HEK293 (cell line): ENCODE measurements at regions of chr5 and their contacts with region 1.

Region 1: GRCh38 chr5:151164686-151165392 is 7.3 kb upstream of the ANXA6 start:
- H3K4me3 ChIP-seq: no peak overlapping the region
- H3K27ac ChIP-seq: no peak overlapping the region
- H3K4me1 ChIP-seq: no peaks in the 10 kb centered on the region
- CTCF ChIP-seq: peak; percentile 74

Region 2: DNA sequence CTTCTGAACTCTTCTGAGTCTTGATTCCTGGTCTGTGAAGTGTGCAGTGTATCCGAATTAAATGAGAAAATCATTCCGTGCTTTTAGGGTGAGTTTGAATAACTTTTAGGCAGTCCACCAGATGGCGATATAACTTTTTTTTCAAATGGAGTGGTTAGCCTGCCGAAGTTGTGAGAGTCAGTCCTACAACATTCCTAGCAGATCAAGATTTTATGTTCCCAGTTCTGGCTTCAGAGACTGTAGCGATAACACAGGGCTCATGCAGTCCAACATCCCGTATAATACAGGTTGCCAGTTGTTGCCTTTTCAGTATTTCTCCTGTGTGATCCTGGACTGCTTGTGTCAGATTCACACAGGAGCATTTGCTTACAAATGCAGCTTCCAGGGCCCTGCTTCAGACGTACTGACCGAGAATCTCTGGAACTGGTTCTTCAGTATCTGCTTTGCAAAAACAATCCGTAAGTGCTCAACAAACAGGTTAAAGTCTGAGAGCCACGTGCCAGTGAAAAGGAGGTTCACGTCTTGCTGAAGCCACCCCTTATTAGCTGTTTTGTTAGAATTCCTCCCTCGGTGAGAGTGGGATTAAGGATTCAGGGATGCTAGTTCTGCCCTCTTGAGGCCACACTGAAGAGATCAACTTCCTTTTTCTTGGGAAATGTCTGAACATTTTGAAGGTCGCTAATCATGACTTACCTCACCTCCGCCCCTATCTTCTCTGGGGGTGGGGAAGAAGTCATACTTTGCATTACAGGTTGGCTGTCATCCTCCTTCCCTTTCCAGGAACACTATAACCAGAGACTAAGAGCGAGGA is 363.5 kb before region 1 on chr5:
- CTCF ChIA-PET with region 1: interaction called, 10 read pairs
- POLR2A ChIA-PET with region 1: no interaction called
- H3K4me3 ChIP-seq: peak overlapping the region; percentile 27
- H3K27ac ChIP-seq: no peak overlapping the region
- H3K4me1 ChIP-seq: no peaks in the 10 kb centered on the region
- CTCF ChIP-seq: no peak; the same call in 1 of the 2 replicates

Region 3: DNA sequence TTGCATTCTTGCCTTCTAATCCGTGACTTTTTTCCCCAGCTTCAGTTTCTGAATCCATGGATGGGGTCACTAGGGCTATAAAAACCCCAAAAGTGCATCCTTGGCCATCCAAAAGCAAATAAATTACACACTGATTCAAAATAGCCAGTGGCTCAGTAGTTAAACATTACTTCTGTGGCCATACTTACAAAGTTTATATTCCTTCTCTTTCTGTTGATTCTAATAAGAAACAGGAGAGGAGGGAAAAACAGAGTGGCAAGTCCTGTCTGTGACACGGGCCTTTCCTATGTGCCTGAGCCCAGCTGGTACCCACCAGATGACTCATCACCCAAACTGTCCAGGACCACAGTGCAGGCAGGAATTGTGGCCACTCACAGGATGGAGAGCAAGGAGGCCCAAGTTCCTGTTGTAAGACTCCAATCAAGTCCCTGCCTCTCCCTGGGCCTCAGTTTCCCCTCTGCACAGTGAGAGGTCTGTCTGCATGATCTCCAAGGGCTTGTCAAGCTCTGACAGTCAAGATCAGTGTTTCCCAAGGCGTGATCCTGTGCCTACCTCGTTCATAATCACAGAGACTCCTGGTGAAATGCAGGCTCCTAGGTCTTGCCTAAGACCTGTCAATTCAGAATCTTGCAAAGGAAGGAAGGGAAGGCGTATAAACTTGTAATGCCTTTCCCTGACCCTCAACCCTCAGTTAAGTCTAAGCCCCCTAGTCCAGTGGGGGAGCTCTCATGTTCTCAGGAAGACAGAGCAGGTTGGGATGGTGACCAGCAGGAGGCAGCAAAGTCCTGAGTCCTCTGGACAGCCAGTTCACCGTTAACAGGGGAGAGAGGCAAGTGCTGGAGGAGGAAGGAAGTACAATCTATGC is 113.5 kb before region 1 on chr5:
- CTCF ChIA-PET with region 1: interaction called, 26 read pairs
- POLR2A ChIA-PET with region 1: no interaction called
- H3K4me3 ChIP-seq: no peak overlapping the region
- H3K27ac ChIP-seq: no peak overlapping the region
- H3K4me1 ChIP-seq: no peaks in the 10 kb centered on the region
- CTCF ChIP-seq: peak; percentile 83; the same call in 1 of the 2 replicates

Region 4: DNA sequence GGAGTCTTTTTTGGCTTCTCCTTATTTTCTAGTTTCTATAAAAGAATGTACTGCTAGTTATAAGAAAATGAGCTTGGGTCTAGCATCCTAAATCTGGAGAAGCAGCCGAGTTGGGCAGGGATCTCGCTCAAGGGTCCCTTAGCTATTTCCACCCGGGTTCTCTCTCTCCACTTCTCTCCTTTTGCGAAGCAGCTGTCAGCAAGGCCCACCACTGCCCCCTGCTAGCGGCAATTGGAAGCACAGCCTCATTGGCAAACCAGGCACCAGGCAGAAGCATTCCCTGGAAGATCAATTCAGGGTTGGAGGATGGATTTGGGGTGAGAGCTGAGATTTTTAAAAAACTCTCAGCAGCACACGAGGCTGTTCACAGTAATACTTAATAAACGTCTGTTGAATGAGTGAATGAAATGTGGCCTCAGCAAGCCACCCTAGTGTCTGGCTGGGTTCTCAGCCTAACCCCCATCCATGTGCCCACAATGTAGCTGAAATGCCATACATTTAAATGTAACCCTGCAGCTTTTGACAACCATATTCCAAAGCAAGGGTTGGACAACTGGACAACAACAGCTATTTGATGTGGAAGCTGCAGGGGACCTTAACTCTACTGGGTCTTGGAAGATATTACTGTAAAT is 49.4 kb before region 1 on chr5:
- CTCF ChIA-PET with region 1: interaction called, 52 read pairs
- POLR2A ChIA-PET with region 1: no interaction called
- H3K4me3 ChIP-seq: no peak overlapping the region
- H3K27ac ChIP-seq: no peak overlapping the region
- H3K4me1 ChIP-seq: no peaks in the 10 kb centered on the region
- CTCF ChIP-seq: peak; percentile 54

Region 5: GRCh38 chr5:151134238-151134637 is 30.6 kb before region 1 on chr5:
- CTCF ChIA-PET with region 1: interaction called, 278 read pairs
- POLR2A ChIA-PET with region 1: no interaction called
- H3K4me3 ChIP-seq: no peak overlapping the region
- H3K27ac ChIP-seq: no peak overlapping the region
- H3K4me1 ChIP-seq: no peaks in the 10 kb centered on the region
- CTCF ChIP-seq: no peak

Region 6: DNA sequence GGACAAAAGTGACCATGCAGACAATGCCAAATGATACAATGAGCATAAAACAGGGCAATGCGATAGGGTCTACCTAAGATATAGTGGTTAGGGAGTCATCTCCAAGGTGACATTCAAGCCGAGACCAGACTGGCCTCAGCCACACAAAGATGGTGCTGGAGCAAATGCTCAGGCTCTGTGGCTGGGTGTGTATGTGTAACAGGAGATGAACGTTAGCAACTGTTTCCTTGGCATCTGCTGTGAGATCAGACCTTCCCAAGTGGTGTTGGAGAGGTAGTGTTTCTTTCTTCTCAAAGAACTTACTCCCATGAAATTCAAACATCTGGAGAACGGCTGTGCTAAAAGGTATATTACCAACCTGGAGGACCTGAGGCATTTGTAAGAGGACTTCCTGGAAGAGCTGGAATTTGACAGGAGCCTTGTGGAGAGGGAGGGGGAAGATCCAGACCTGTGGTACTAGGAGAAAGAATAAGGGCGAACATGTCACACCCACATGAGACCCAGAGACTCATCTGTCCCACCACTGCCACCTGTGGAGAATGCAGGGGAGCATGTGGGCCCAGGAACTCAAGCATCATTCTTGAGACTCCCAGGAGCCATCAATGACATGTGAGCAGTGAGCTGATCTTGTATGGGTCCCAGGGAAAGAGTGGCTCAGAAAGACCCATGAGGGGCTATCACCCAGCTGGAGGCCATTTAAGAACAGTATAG is 14.1 kb after region 1 on chr5:
- CTCF ChIA-PET with region 1: interaction called, 10 read pairs
- POLR2A ChIA-PET with region 1: no interaction called
- H3K4me3 ChIP-seq: no peak overlapping the region
- H3K27ac ChIP-seq: no peak overlapping the region
- H3K4me1 ChIP-seq: no peaks in the 10 kb centered on the region
- CTCF ChIP-seq: no peak